ENCODE measurements at regions of chr2 and their contacts with region 1.

Region 1: DNA sequence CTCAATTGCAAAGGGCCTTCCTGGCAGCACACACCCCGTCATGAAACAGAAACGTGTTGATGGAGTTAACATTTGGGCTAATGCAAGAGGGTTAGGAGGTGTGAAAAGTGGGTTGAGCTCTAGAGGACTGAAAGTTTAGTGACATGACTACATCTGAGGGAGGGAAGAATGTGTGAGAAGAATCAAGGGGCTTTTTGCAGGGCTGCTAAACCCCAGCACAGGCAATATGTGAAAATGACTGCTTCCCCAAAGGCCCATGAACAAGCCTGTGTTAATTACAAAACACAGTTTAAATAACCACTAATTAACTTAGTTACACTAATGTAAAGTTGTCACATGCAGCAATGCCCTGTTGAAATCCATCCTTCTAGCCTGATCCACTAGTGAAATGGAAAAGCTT is 63.4 kb upstream of the PEX13 start:
- DNase-seq: peak; percentile 39 to 70
- ATAC-seq: peak; percentile 96 to 98 (median 98)
- H3K4me3 ChIP-seq: no peak overlapping the region
- H3K4me3 Mint-ChIP-seq: peak overlapping the region; percentile 74
- H3K27ac ChIP-seq: peak overlapping the region; percentile 80
- H3K27ac Mint-ChIP-seq: peak overlapping the region; percentile 83 to 95
- H3K4me1 ChIP-seq: peaks cover 16% of the 10 kb centered on the region
- H3K4me1 Mint-ChIP-seq: peaks cover 33 to 47% of the 10 kb centered on the region in 2 donors
- H3K27me3 ChIP-seq: no peaks in the 10 kb centered on the region
- H3K27me3 Mint-ChIP-seq: no peaks in the 10 kb centered on the region
- CTCF ChIP-seq: no peak

Region 2: DNA sequence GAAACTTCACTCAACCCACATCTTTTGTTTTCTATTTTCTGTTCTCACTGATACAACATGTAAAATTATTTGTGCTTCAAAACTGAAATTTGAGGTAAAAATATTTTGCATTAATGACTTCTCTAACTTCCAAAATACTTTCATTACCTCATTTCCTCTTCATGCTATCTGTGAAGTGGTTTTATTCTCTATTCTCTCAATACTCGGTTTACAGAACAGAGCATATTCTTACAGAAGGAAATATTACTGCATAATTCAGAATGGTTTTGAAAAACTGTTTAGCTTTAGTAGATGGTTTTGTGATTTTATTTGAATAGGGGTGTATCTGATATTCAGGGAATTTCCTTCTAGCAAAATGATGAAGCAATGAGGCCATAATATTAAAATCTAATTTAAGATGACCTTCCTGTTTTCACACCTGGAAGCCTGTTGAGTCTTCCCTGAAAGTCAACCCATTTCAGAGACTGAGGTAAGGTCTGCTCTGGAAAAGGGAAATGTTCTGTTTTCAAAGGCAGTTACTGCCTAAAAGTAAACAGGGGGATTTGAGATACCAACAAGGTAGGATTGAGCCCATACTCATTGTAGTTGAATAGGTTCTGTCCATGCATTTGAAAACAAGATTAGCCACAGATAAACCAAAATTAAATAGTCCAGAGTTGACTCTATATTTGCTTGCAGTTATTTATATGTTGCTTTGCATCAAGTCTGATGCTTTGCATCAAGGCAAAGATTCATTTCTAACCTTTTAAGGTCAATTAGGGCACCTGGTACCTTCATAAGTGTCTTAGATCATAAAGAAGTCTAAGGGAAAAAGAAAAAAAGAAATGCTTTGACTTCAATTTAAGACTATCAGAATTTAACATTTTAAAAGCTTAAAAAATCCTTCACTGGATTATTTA is 12.6 kb after region 1 on chr2:
- intact Hi-C with region 1: loop called (anchors 1 kb)
- DNase-seq: peak in 1 of 2 donors; percentile 12
- ATAC-seq: no peak
- H3K4me3 ChIP-seq: peak overlapping the region; percentile 3
- H3K4me3 Mint-ChIP-seq: peak overlapping the region; percentile 70
- H3K27ac ChIP-seq: peak overlapping the region; percentile 97
- H3K27ac Mint-ChIP-seq: peak overlapping the region; percentile 78 to 85
- H3K4me1 ChIP-seq: no peaks in the 10 kb centered on the region
- H3K4me1 Mint-ChIP-seq: peaks cover 23 to 34% of the 10 kb centered on the region in 2 donors
- H3K27me3 ChIP-seq: no peaks in the 10 kb centered on the region
- H3K27me3 Mint-ChIP-seq: no peaks in the 10 kb centered on the region
- CTCF ChIP-seq: no peak

Region 3: GRCh38 chr2:60992985-60993392 is 38.9 kb after region 1 on chr2:
- intact Hi-C with region 1: loop called (anchors 2 kb)
- DNase-seq: peak; percentile 40 to 71
- ATAC-seq: peak; percentile 98 to 100 (median 99)
- H3K4me3 ChIP-seq: peak overlapping the region; percentile 23
- H3K4me3 Mint-ChIP-seq: peak overlapping the region; percentile 82
- H3K27ac ChIP-seq: peak overlapping the region; percentile 87
- H3K27ac Mint-ChIP-seq: peak overlapping the region; percentile 93 to 98
- H3K4me1 ChIP-seq: peaks cover 4% of the 10 kb centered on the region
- H3K4me1 Mint-ChIP-seq: peaks cover 16 to 20% of the 10 kb centered on the region in 2 donors
- H3K27me3 ChIP-seq: no peaks in the 10 kb centered on the region
- H3K27me3 Mint-ChIP-seq: no peaks in the 10 kb centered on the region
- CTCF ChIP-seq: no peak